ENCODE measurements at regions of chr17 and their contacts with region 1.

Region 1: GRCh38 chr17:74368092-74369081 is 1.1 kb downstream of the GPR142 start:
- DNase-seq: peak; percentile 73 to 87
- ATAC-seq: peak; percentile 83 to 96 (median 91)
- H3K4me3 ChIP-seq: no peak overlapping the region
- H3K27ac ChIP-seq: no peak overlapping the region
- H3K4me1 ChIP-seq: no peaks in the 10 kb centered on the region
- H3K27me3 ChIP-seq: no peaks in the 10 kb centered on the region
- CTCF ChIP-seq: peak; percentile 89

Region 2: DNA sequence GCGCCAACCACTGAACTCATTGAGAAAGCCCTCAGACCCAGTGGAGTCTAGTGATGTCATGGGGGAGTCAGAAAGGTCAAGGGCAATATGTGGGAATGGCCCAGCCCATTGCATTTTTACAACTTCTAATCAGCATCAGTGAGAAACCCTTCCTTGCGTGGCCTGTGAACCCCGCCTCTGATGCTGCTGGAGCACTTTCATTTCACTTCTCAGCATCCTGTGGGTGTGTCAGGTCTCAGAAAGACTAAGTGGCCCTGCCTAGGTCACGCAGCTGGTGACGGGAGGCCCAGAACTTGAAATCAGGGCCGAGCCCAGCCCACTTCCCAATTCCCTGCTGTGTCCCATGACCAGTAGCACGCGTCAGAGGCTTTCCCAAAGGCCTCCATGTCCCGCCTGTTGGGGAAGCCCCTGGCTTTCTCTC is 88.3 kb before region 1 on chr17:
- intact Hi-C with region 1: no loop called
- DNase-seq: no peak
- ATAC-seq: no peak
- H3K4me3 ChIP-seq: no peak overlapping the region
- H3K27ac ChIP-seq: no peak overlapping the region
- H3K4me1 ChIP-seq: no peaks in the 10 kb centered on the region
- H3K27me3 ChIP-seq: peaks cover 0 to 5% (median 0%) of the 10 kb centered on the region in 3 donors
- CTCF ChIP-seq: no peak

Region 3: GRCh38 chr17:74532115-74532514 is 163.7 kb after region 1 on chr17:
- intact Hi-C with region 1: loop called in 1 of 2 experiments (anchors 2 kb)
- DNase-seq: no peak
- ATAC-seq: peak in 2 of 4 donors; percentile 44 to 61
- H3K4me3 ChIP-seq: no peak overlapping the region
- H3K27ac ChIP-seq: no peak overlapping the region
- H3K4me1 ChIP-seq: no peaks in the 10 kb centered on the region
- H3K27me3 ChIP-seq: peaks cover 0 to 3% (median 0%) of the 10 kb centered on the region in 3 donors
- CTCF ChIP-seq: no peak

Region 4: DNA sequence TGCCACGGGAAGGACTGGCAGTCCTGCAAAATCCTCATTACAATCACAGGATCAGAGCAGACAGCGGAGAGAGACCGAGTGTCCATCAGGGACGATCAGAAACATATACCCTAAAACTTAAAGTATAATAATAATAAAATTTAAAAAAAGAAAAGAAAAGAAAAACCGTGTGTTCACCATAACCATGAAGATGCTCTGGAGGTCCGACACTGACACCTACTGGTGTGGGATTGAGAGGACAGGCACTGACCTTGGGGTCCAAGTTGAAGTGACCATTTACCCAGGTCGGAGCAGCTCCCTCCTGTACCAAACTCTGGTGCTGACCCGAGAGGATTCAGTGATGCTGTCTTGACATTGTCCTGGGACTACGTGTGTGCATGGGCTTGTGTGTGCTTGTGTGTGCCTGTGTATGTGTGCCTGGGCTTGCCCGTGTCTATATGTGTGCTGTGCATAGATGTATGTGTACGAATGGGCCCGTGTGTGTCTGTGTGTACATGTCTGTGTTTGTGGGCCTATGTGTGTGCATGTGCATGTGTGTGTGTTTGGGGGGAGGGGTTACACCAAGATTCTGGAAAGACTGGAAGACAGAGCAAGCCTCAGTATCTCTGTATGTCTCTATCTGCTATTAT is 233.7 kb after region 1 on chr17:
- intact Hi-C with region 1: loop called in 1 of 2 experiments (anchors 5 kb)
- DNase-seq: no peak
- ATAC-seq: peak; percentile 53 to 71 (median 65)
- H3K4me3 ChIP-seq: no peak overlapping the region
- H3K27ac ChIP-seq: no peak overlapping the region
- H3K4me1 ChIP-seq: no peaks in the 10 kb centered on the region
- H3K27me3 ChIP-seq: peaks cover 0 to 9% (median 0%) of the 10 kb centered on the region in 3 donors
- CTCF ChIP-seq: peak; percentile 64

Measured in psoas muscle (tissue), 8 donors.